ENCODE measurements at regions of chr1 and their contacts with region 1.

Region 1: GRCh38 chr1:23699280-23700179 is 7.9 kb downstream of the RPL11 start:
- DNase-seq: no peak
- ATAC-seq: peak in 2 of 4 donors; percentile 10 to 27
- H3K4me3 ChIP-seq: no peak overlapping the region
- H3K27ac ChIP-seq: no peak overlapping the region
- H3K4me1 ChIP-seq: peaks cover 0 to 47% (median 24%) of the 10 kb centered on the region in 12 donors
- H3K27me3 ChIP-seq: no peaks in the 10 kb centered on the region
- CTCF ChIP-seq: no peak
- POLR2A ChIP-seq: no peak

Region 2: GRCh38 chr1:23736437-23737134 is 37.1 kb after region 1 on chr1:
- intact Hi-C with region 1: loop called in 2 of 10 experiments (anchors 5 kb)
- DNase-seq: no peak
- ATAC-seq: no peak
- H3K4me3 ChIP-seq: no peak overlapping the region
- H3K27ac ChIP-seq: no peak overlapping the region
- H3K4me1 ChIP-seq: peaks cover 0 to 10% (median 0%) of the 10 kb centered on the region in 12 donors
- H3K27me3 ChIP-seq: no peaks in the 10 kb centered on the region
- CTCF ChIP-seq: no peak
- POLR2A ChIP-seq: no peak

Region 3: DNA sequence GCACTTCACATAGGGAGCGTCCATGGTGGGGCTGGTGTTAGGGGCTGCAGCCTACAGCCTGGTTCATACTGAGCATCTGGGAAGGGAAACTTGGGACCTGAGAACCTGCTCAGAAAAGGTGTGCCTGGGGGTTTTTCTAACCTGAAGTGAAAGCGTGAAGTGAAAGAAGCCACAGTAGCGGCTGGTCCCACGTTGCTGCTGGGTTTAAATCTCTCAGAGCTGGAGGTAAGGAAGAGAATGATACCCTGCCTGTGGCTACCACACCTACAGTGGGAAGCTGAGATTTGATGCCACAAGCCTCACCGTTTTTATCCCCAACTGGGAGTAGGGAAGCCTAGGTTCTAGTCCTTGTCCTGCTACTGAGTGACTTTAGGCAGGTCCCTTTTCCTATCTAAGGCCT is 189.5 kb after region 1 on chr1:
- intact Hi-C with region 1: no loop called
- DNase-seq: no peak
- ATAC-seq: no peak
- H3K4me3 ChIP-seq: no peak overlapping the region
- H3K27ac ChIP-seq: no peak overlapping the region
- H3K4me1 ChIP-seq: peaks cover 0 to 11% (median 0%) of the 10 kb centered on the region in 12 donors
- H3K27me3 ChIP-seq: no peaks in the 10 kb centered on the region
- CTCF ChIP-seq: no peak
- POLR2A ChIP-seq: no peak

Region 4: DNA sequence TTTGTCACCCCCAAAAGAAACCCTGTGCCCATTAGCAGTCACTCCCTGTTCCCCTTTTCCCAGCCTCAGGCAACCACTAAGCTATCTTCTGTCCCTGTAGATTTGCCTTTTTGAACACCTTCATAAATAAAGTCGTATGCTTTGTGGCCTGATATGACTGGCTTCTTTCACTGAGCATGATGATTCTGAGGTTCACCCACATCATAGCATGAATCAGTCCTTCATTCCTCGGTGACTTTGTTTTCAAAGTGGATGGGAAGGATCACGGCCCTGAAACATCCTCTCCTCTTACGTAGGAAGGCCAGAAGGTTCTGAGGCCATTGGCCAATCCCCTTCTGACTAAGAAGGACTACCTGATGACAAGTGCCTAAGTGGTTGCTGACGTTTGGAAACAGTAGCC is 755.1 kb after region 1 on chr1:
- intact Hi-C with region 1: no loop called
- DNase-seq: no peak
- ATAC-seq: no peak
- H3K4me3 ChIP-seq: no peak overlapping the region
- H3K27ac ChIP-seq: no peak overlapping the region
- H3K4me1 ChIP-seq: no peaks in the 10 kb centered on the region
- H3K27me3 ChIP-seq: no peaks in the 10 kb centered on the region
- CTCF ChIP-seq: no peak
- POLR2A ChIP-seq: no peak

Measured in heart left ventricle (tissue), 16 donors.